ENCODE measurements at regions of chr4 and their contacts with region 1.

Region 1: GRCh38 chr4:145819853-145820181 is 118.8 kb downstream of the ZNF827 start:
- DNase-seq: no peak
- ATAC-seq: no peak
- H3K4me3 ChIP-seq: no peak overlapping the region
- H3K27ac ChIP-seq: no peak overlapping the region
- H3K4me1 ChIP-seq: no peaks in the 10 kb centered on the region
- H3K27me3 ChIP-seq: peaks cover 2 to 13% of the 10 kb centered on the region in 2 experiments; a peak in 3 of 5 replicates
- CTCF ChIP-seq: no peak
- EP300 ChIP-seq: no peak
- POLR2A ChIP-seq: no peak
- RAD21 ChIP-seq: no peak

Region 2: DNA sequence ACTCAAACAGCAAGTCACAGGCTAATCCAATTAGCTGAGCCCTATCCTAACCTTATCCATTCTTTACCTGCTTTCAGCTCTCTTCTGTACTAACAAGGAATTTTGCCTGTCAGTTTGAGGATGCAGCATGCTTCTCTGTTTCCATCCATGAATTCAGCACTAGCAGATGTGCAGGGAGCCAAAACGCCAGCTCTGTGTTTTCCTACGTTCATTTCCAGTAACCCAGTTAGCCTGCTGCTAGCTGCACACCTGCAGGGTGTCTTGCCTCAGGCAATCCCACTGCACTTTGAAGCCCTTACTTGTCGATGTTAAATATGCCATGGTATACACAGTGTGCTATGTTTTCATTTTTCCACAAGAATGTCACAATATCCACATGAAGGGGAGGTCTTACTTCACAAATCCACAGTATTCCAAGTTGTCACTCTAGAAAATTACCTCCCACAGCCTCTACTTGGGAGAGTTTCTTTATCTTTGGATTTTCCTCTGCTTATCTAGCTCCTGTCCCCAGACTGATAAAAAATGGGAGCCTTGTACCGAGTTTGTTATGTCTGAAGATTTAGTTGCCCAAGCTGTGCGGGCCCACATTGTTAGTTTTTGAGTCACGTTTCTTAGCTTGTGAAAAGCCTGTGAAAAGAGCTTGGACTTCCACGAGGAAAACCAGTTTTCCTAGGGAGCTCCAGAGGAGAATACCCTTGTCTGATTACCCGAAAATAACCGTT is 1301.5 kb before region 1 on chr4:
- CTCF ChIA-PET with region 1: no interaction called
- POLR2A ChIA-PET with region 1: no interaction called
- in situ Hi-C with region 1: no loop called
- intact Hi-C with region 1: no loop called
- DNase-seq: no peak
- ATAC-seq: no peak
- H3K4me3 ChIP-seq: no peak overlapping the region
- H3K27ac ChIP-seq: no peak overlapping the region
- H3K4me1 ChIP-seq: no peaks in the 10 kb centered on the region
- H3K27me3 ChIP-seq: no peaks in the 10 kb centered on the region
- CTCF ChIP-seq: no peak
- EP300 ChIP-seq: no peak
- POLR2A ChIP-seq: no peak
- RAD21 ChIP-seq: no peak

Region 3: GRCh38 chr4:145709843-145710242 is 110.0 kb before region 1 on chr4:
- CTCF ChIA-PET with region 1: no interaction called
- POLR2A ChIA-PET with region 1: no interaction called
- in situ Hi-C with region 1: no loop called
- intact Hi-C with region 1: no loop called
- DNase-seq: no peak
- ATAC-seq: no peak
- H3K4me3 ChIP-seq: no peak overlapping the region
- H3K27ac ChIP-seq: no peak overlapping the region
- H3K4me1 ChIP-seq: no peaks in the 10 kb centered on the region
- H3K27me3 ChIP-seq: no peaks in the 10 kb centered on the region
- CTCF ChIP-seq: no peak
- EP300 ChIP-seq: no peak
- POLR2A ChIP-seq: no peak
- RAD21 ChIP-seq: no peak

Region 4: GRCh38 chr4:145956288-145956890 is 136.6 kb after region 1 on chr4:
- CTCF ChIA-PET with region 1: no interaction called
- POLR2A ChIA-PET with region 1: no interaction called
- in situ Hi-C with region 1: no loop called
- intact Hi-C with region 1: no loop called
- DNase-seq: peak; percentile 51 to 64 (median 60)
- ATAC-seq: peak; percentile 80
- H3K4me3 ChIP-seq: no peak overlapping the region
- H3K27ac ChIP-seq: no peak overlapping the region
- H3K4me1 ChIP-seq: no peaks in the 10 kb centered on the region; a peak in 1 of 5 replicates
- H3K27me3 ChIP-seq: no peaks in the 10 kb centered on the region
- CTCF ChIP-seq: peak; percentile 55 to 69 (median 57)
- EP300 ChIP-seq: no peak
- POLR2A ChIP-seq: no peak
- RAD21 ChIP-seq: no peak

Region 5: DNA sequence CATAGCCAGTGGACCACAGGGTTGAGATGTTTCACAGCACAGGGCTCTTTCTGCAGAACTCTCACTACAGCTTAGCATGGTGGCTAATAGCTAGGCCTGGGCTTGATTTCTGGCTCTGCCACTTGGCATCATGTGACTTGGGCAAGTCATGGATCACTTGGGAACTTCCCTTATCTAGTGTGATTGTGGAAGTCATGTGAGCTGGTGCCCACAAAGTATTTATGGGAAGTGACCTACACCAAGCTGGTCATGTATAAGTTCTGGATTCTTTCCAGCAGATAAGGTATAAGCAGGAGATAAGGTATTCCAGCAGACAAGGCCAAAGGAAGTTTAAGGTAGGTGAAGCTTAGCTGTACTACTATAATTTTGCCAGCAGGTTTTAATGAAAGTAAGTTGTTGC is 455.6 kb after region 1 on chr4:
- CTCF ChIA-PET with region 1: no interaction called
- POLR2A ChIA-PET with region 1: no interaction called
- in situ Hi-C with region 1: no loop called
- intact Hi-C with region 1: loop called (anchors 5 kb)
- DNase-seq: peak in 1 of 4 experiments; percentile 14
- ATAC-seq: no peak
- H3K4me3 ChIP-seq: no peak overlapping the region
- H3K27ac ChIP-seq: no peak overlapping the region
- H3K4me1 ChIP-seq: peaks cover 0 to 5% of the 10 kb centered on the region in 2 experiments; a peak in 2 of 5 replicates
- H3K27me3 ChIP-seq: no peaks in the 10 kb centered on the region
- CTCF ChIP-seq: no peak
- EP300 ChIP-seq: no peak
- POLR2A ChIP-seq: no peak
- RAD21 ChIP-seq: no peak

Measured in K562 (cell line).